OCI-LY7 (cell line): ENCODE measurements at regions of chr11 and their contacts with region 1.

Region 1: GRCh38 chr11:126419801-126420697 is 64.6 kb downstream of the ST3GAL4 start:
- DNase-seq: peak; percentile 81
- H3K4me3 ChIP-seq: peak overlapping the region; percentile 51
- H3K27ac ChIP-seq: peak overlapping the region; percentile 82
- H3K4me1 ChIP-seq: peaks cover 45% of the 10 kb centered on the region
- CTCF ChIP-seq: no peak

Region 2: GRCh38 chr11:126268708-126269579 is 151.1 kb before region 1 on chr11 and contains the starts of genes FOXRED1 and SRPRA:
- CTCF ChIA-PET with region 1: no interaction called
- POLR2A ChIA-PET with region 1: no interaction called
- intact Hi-C with region 1: no loop called
- DNase-seq: peak; percentile 99
- H3K4me3 ChIP-seq: peak within 1 kb of the TSS; percentile 98
- H3K27ac ChIP-seq: peak within 1 kb of the TSS; percentile 52
- H3K4me1 ChIP-seq: peaks cover 19% of the 10 kb centered on the region
- CTCF ChIP-seq: no peak
- total RNA-seq, gene FOXRED1: 30.4 and 42.5 TPM in 2 replicates
- total RNA-seq, gene SRPRA: 56.5 and 62.9 TPM in 2 replicates

Region 3: DNA sequence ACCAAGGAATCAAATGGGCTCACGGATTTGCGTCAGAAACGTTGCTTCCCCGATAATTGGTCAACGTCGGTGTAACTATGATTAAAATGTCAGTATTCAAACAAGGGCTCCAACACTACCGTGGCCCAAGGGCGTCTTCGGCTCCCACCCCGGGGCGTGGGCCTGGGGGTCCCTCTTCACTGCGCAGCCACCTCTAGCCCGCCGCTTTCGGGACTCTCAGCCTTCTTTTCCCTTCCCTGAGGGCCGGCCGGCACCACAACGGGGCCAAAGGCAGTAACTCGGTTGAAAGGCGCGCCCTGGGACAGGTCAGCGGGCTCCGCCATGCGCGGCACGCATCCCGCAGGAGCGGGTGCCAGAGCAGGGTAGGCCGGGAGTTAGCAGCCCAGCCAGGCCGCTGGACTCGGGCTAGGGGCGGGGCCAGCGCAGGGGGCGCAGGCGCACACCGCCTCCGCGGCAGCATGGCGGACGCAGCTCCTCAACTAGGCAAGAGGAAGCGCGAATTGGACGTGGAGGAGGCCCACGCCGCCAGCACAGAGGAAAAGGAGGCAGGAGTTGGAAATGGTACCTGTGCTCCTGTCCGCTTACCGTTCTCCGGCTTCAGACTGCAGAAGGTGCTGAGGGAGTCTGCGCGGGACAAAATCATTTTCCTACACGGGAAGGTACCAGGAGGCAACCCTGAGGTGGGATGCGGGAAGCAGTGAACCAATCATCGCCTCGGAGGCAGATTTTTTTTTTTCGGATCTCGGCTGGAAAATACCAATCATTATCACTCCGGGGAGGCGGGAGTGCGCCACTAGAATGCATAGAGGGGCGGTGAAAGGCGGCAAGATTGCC is 116.2 kb before region 1 on chr11 and contains the start of gene DCPS:
- CTCF ChIA-PET with region 1: no interaction called
- POLR2A ChIA-PET with region 1: interaction called, 7 read pairs
- intact Hi-C with region 1: loop called (anchors 2 kb)
- DNase-seq: peak; percentile 89
- H3K4me3 ChIP-seq: peak within 1 kb of the TSS; percentile 92
- H3K27ac ChIP-seq: peak within 1 kb of the TSS; percentile 71
- H3K4me1 ChIP-seq: peaks cover 17% of the 10 kb centered on the region
- CTCF ChIP-seq: no peak
- total RNA-seq, gene DCPS: 24.2 and 30.4 TPM in 2 replicates

Region 4: GRCh38 chr11:126355324-126355925 is 64.6 kb before region 1 on chr11 and contains the start of gene ST3GAL4:
- CTCF ChIA-PET with region 1: interaction called, 3 read pairs
- POLR2A ChIA-PET with region 1: interaction called, 27 read pairs
- intact Hi-C with region 1: loop called (anchors 2 kb)
- DNase-seq: peak; percentile 83
- H3K4me3 ChIP-seq: peak within 1 kb of the TSS; percentile 80
- H3K27ac ChIP-seq: peak within 1 kb of the TSS; percentile 66
- H3K4me1 ChIP-seq: peaks cover 39% of the 10 kb centered on the region
- CTCF ChIP-seq: no peak
- total RNA-seq, gene ST3GAL4: 10.0 and 14.3 TPM in 2 replicates

Region 5: GRCh38 chr11:126375726-126376125 is 44.3 kb before region 1 on chr11:
- CTCF ChIA-PET with region 1: no interaction called
- POLR2A ChIA-PET with region 1: interaction called, 10 read pairs
- intact Hi-C with region 1: no loop called
- DNase-seq: no peak
- H3K4me3 ChIP-seq: no peak overlapping the region
- H3K27ac ChIP-seq: no peak overlapping the region
- H3K4me1 ChIP-seq: no peaks in the 10 kb centered on the region
- CTCF ChIP-seq: no peak

Region 6: DNA sequence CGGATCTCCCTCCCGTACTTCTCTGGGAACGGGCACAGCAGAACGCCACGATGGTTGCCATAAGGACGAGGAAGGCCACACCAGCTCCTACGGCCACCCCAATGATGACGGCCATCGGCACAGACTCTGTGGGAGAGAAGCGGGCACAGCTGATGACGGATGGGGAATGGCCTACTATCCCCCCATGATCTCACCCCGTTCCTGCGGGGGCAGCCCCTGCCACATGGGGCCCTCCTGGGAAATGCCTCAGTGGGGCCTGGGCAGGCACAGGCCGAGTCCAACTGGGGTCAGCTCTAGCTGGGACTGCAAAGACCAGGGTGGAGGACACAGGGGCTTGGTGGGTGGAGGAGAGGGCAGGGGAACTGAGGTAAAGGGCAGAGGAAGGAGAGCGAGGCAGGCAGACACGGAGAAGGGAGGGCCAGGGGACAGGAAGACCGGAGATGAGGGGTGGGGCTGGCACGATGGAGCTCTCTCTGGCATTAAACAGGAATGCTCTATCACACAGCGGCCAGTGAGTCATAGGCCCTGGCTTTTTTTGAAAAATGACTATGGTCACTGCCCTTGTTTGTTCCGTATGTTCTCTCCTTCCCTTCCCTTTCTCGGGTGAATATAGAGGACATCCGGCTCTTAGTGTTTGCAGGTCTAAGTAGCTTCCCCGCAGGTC is 11.5 kb after region 1 on chr11:
- CTCF ChIA-PET with region 1: no interaction called
- POLR2A ChIA-PET with region 1: interaction called, 10 read pairs
- intact Hi-C with region 1: no loop called
- DNase-seq: no peak
- H3K4me3 ChIP-seq: no peak overlapping the region
- H3K27ac ChIP-seq: no peak overlapping the region
- H3K4me1 ChIP-seq: peaks cover 13% of the 10 kb centered on the region
- CTCF ChIP-seq: no peak